Activated CD4-positive, alpha-beta memory T cell treated with anti-CD3 and anti-CD28 coated beads for 36 hours (primary cell): ENCODE measurements at regions of chrX and their contacts with region 1.

Region 1: GRCh38 chrX:13653022-13653693 is at the start of gene TCEANC:
- DNase-seq: peak; percentile 96
- H3K4me3 Mint-ChIP-seq: peak within 1 kb of the TSS; percentile 84
- H3K27ac Mint-ChIP-seq: peak within 1 kb of the TSS; percentile 93
- H3K4me1 Mint-ChIP-seq: peaks cover 22% of the 10 kb centered on the region
- H3K27me3 Mint-ChIP-seq: no peaks in the 10 kb centered on the region
- total RNA-seq, gene TCEANC: 1.9 TPM

Region 2: GRCh38 chrX:12610079-12610478 is 1043.1 kb before region 1 on chrX:
- CTCF ChIA-PET with region 1: no interaction called
- POLR2A ChIA-PET with region 1: no interaction called
- intact Hi-C with region 1: no loop called
- DNase-seq: no peak
- H3K4me3 Mint-ChIP-seq: no peak overlapping the region
- H3K27ac Mint-ChIP-seq: no peak overlapping the region
- H3K4me1 Mint-ChIP-seq: no peaks in the 10 kb centered on the region
- H3K27me3 Mint-ChIP-seq: no peaks in the 10 kb centered on the region

Region 3: DNA sequence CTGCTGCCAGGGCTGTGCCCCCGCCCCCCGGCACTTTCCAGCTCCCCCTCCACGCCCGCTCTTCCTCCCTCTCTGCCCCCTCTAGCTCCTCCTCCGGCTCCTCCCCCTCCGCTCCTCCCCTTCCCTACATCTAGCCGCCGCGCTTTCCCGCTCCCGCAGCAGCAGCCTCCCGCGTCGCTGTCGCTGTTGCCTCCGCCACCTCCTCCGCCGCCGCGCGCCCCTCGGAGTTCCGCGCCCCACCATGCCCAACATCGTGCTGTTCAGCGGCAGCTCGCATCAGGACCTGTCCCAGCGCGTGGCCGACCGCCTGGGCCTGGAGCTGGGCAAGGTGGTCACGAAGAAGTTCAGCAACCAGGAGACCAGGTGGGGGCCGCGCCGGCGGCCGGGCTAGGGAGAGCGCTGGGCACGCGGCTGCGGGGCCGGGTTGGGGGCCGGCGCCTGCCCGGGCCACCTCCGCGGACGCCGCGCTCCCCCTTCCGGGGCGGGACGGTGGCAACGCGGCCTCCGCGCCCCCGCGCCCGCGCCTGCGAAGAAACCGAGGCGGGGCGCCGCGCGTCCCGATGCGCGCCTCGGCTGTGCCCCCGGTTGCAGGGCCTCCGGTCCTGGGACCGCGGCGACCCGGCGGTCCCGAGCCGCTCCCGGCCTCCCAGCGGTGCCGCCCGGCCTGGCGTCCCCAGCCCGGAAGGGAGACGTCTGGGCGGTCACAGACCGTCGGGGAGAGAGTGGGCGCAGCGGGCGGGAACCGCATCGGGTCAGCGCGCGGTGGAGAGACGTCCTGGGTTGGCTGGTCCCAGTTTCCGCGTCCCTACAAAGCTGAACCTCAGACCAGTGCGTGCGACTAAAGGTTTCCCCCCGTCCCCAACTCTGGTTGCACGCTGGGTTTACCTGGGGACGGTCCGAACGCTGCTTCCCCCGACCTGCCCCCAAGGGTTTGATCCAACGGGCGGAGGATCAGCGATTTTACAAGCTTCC is 861.6 kb before region 1 on chrX and contains the start of gene PRPS2:
- CTCF ChIA-PET with region 1: no interaction called
- POLR2A ChIA-PET with region 1: no interaction called
- intact Hi-C with region 1: loop called (anchors 5 kb)
- DNase-seq: peak; percentile 81
- H3K4me3 Mint-ChIP-seq: peak within 1 kb of the TSS; percentile 84
- H3K27ac Mint-ChIP-seq: peak within 1 kb of the TSS; percentile 83
- H3K4me1 Mint-ChIP-seq: peaks cover 26% of the 10 kb centered on the region
- H3K27me3 Mint-ChIP-seq: no peaks in the 10 kb centered on the region
- total RNA-seq, gene PRPS2: 104 to 105 TPM

Region 4: DNA sequence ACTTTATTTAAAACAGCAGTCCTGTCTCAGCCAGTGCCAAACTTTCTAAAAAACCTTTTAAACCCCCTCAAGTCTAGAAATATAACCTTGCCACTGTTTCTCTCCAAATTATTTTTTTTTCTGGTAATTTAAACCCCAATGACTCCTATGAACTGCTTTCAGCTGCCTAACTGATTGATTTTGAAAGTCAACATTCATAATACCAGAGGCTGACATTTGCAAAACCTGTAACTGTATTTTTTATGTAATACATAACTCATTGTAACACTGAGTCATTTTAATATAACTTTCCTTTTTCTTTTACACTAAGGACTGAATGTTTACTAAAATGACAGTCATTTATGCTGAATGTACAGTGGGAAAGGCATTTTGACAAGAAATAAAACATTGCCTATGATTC is 102.8 kb before region 1 on chrX:
- CTCF ChIA-PET with region 1: no interaction called
- POLR2A ChIA-PET with region 1: no interaction called
- intact Hi-C with region 1: loop called (anchors 1 kb)
- DNase-seq: no peak
- H3K4me3 Mint-ChIP-seq: no peak overlapping the region
- H3K27ac Mint-ChIP-seq: no peak overlapping the region
- H3K4me1 Mint-ChIP-seq: peaks cover 12% of the 10 kb centered on the region
- H3K27me3 Mint-ChIP-seq: peaks cover 8% of the 10 kb centered on the region

Region 5: DNA sequence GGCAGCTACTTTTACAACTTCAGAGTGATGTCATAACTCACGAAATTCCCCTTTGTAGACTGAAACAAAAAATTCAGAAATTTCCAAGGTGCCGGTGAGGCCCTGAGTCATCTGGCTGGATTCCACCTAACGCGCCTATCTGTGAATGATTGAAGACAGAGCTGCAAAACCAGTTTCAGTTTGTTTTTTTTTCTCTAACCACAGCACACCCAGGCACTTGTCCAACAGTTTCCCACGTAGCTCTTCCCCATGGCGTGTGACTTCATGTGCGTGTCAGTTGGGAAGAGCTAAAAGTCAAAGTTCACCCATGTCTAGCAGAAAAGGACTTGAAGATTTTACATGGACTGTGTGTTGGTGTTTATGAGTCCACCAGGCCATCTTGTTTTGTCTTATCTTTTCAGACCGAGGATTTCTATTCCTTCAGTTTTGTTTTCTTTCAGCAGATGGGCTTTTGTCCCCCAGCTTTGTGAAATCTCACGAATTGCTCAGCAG is 16.1 kb after region 1 on chrX:
- CTCF ChIA-PET with region 1: no interaction called
- POLR2A ChIA-PET with region 1: no interaction called
- intact Hi-C with region 1: loop called (anchors 2 kb)
- DNase-seq: peak; percentile 76
- H3K4me3 Mint-ChIP-seq: peak overlapping the region; percentile 70
- H3K27ac Mint-ChIP-seq: peak overlapping the region; percentile 95
- H3K4me1 Mint-ChIP-seq: peaks cover 24% of the 10 kb centered on the region
- H3K27me3 Mint-ChIP-seq: no peaks in the 10 kb centered on the region

Region 6: GRCh38 chrX:13688958-13689740 is 36.0 kb after region 1 on chrX and contains the start of gene RAB9A:
- CTCF ChIA-PET with region 1: interaction called, 4 read pairs
- POLR2A ChIA-PET with region 1: interaction called, 5 read pairs
- intact Hi-C with region 1: loop called (anchors 1 kb)
- DNase-seq: peak; percentile 88
- H3K4me3 Mint-ChIP-seq: peak within 1 kb of the TSS; percentile 87
- H3K27ac Mint-ChIP-seq: peak within 1 kb of the TSS; percentile 96
- H3K4me1 Mint-ChIP-seq: peaks cover 58% of the 10 kb centered on the region
- H3K27me3 Mint-ChIP-seq: no peaks in the 10 kb centered on the region
- total RNA-seq, gene RAB9A: 28.2 to 32.1 TPM

Region 7: DNA sequence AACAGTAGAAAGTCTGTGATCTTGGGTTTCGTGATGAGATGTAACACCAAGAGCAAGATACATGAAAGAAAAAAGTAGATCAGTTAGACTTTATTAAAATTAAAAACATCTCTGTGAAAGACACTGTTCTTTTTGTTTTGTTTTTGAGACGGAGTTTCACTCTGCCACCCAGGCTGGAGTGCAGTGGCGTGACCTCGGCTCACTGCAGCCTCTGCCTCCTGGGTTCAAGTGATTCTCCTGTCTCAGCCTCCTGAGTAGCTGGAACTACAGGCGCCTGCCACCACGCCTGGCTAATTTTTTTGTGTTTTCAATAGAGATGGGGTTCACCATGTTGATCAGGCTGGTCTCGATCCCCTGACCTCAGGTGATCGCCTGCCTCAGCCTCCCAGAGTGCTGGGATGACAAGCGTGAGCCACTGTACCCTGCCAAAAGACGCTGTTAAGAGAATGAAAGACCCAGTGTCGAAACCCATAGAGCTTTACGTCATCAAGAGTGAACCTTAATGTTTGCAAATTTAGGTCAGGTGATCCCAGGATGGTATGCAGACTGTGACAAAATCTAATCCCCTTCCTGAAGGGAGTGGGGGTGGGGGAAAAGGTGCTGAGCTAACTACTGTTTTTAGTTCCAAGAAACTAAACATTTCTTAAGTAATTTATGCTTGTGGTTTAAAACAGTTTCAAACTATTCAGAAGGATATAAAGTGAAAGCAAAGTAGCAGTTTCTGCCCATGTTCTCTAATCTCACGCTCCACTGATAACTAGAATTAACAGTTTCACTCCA is 89.4 kb after region 1 on chrX:
- CTCF ChIA-PET with region 1: interaction called, 3 read pairs
- POLR2A ChIA-PET with region 1: no interaction called
- intact Hi-C with region 1: loop called (anchors 2 kb)
- DNase-seq: peak; percentile 71
- H3K4me3 Mint-ChIP-seq: peak overlapping the region; percentile 60
- H3K27ac Mint-ChIP-seq: peak overlapping the region; percentile 80
- H3K4me1 Mint-ChIP-seq: peaks cover 20% of the 10 kb centered on the region
- H3K27me3 Mint-ChIP-seq: no peaks in the 10 kb centered on the region